ENCODE measurements at regions of chr2 and their contacts with region 1.

Region 1: DNA sequence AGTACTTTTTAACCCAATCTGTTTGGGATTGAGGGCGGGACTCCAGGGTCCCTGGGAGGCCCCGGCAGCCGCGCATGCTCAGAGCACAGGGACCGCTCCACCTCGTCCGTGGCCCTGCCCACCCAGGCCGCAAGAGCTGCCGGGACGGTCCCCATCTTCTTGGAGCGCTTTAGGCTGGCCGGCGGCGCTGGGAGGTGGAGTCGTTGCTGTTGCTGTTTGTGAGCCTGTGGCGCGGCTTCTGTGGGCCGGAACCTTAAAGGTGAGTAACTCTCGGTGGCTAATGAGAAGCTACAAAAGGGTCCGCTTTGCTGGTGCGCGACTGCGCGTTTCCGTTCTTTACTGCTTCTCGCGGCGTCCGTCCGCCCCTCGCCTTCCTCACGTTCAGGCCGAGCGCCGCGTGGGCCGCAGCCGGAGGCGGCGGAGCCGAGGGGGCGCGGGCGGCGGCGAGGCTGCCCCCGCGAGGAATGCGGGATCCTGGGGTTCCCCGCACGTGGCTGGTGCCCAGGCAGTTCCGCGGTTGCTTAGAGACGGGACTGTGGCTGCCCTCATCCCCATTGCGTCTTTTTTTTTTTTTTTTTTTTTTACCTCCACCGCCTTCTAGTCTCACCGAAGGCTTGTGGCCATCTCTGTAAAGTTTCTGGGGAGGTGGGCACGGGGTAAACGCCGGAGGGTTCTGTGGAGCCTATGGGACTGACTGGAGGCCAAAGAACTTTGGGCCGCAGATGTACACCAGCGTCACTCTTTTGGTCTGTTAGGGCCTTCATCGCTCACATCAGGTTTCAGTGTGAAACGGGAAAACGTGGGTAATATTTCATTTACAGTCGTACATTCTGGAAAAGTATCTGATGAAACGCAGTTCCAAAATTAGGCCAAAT is at the start of gene SSB:
- DNase-seq: peak; percentile 89
- ATAC-seq: peak; percentile 96
- H3K4me3 Mint-ChIP-seq: peak within 1 kb of the TSS; percentile 91
- H3K27ac Mint-ChIP-seq: peak within 1 kb of the TSS; percentile 94
- H3K4me1 Mint-ChIP-seq: peaks cover 22% of the 10 kb centered on the region
- H3K27me3 Mint-ChIP-seq: no peaks in the 10 kb centered on the region
- CTCF ChIP-seq: no peak
- total RNA-seq, gene SSB: 94.7 and 100 TPM in 2 replicates

Region 2: DNA sequence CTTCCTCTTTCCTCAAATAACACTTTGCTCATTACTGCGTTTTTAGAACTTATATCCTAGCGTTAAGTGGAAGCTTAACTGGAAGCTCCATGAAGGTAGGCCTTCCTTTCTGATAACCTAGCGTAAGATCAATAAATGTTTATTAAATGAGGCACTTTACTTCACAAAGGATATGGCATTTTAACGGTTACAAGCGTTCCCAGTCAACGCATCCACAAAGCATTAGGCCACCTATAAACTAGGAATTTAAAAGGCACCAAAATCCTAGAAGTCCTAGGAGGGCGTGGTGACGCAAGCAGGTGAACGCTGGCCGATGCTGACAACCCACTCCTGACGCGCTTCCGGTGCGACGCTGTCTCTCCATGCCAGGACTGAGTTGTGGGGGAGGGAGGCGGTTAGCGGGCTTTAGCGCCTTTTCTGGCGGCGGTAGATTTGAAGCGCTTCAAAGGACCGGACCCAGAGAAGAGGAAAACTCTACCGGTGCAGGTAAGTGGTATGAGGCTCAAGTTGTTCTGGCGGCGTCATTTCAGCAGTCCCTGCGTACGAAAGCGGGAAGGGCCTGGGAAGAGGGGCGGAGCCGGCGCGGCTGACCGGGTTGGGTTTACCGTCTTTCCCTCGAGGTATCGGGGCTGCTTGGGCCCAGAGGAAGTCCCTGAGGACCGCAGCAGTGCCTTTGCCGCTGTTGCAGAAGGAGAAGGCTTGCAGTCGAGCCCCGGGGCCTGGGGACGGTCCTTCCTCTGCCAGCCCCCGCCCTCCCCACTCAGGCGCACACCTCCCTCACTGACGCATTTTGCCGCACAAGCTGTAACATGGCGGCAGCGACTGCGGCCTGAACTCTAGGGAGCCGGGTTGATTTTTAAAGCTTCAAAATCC is 214.7 kb before region 1 on chr2 and contains the start of gene PPIG:
- CTCF ChIA-PET with region 1: no interaction called
- POLR2A ChIA-PET with region 1: interaction called, 14 read pairs
- intact Hi-C with region 1: loop called (anchors 1 kb)
- DNase-seq: peak; percentile 75
- ATAC-seq: peak; percentile 89
- H3K4me3 Mint-ChIP-seq: peak within 1 kb of the TSS; percentile 99
- H3K27ac Mint-ChIP-seq: peak within 1 kb of the TSS; percentile 99
- H3K4me1 Mint-ChIP-seq: peaks cover 39% of the 10 kb centered on the region
- H3K27me3 Mint-ChIP-seq: no peaks in the 10 kb centered on the region
- CTCF ChIP-seq: no peak
- total RNA-seq, gene PPIG: 68.0 and 69.8 TPM in 2 replicates

Region 3: DNA sequence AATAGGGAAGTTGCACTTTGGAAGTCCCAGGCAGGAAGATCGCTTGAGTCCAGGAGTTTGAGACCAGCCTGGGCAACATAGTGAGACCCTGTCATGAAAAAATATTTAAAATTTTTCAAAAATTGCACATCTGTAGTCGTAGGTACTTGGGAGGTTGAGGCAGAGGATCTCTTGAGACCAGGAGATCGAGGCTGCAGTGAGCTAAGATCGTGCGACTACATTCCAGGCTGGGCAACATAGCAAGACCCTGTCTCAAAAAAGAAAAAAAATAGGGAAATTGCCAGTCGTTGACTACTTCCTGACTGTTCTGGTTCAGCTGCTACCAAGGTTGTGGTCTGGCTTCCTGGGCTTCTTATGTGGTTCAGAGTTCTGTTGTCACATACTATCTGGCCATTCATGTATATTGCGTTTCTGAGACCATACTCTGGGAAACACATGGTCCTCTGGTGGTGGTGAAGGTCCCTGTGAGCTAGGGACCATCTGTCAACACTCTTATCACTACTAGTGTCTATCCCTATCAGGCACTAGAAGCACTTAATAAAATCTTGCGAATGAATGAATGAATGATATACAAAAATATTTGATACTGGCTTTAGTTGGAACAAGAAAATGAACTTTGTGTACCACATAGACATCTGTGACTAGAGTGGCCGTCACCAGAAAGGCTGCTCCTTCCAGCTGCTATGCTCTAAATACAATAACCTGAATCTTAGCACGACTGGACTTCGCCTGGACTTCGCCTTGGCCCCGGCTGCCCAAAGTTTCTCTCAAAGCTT is 66.2 kb before region 1 on chr2:
- CTCF ChIA-PET with region 1: no interaction called
- POLR2A ChIA-PET with region 1: no interaction called
- intact Hi-C with region 1: loop called (anchors 2 kb)
- DNase-seq: no peak
- ATAC-seq: no peak
- H3K4me3 Mint-ChIP-seq: peak overlapping the region; percentile 90
- H3K27ac Mint-ChIP-seq: no peak overlapping the region
- H3K4me1 Mint-ChIP-seq: peaks cover 15% of the 10 kb centered on the region
- H3K27me3 Mint-ChIP-seq: peaks cover 12% of the 10 kb centered on the region
- CTCF ChIP-seq: no peak

Region 4: GRCh38 chr2:169782513-169782912 is 16.4 kb before region 1 on chr2:
- CTCF ChIA-PET with region 1: no interaction called
- POLR2A ChIA-PET with region 1: no interaction called
- intact Hi-C with region 1: no loop called
- DNase-seq: no peak
- ATAC-seq: no peak
- H3K4me3 Mint-ChIP-seq: no peak overlapping the region
- H3K27ac Mint-ChIP-seq: no peak overlapping the region
- H3K4me1 Mint-ChIP-seq: no peaks in the 10 kb centered on the region
- H3K27me3 Mint-ChIP-seq: peaks cover 4% of the 10 kb centered on the region
- CTCF ChIP-seq: no peak

Region 5: GRCh38 chr2:169877398-169877797 is 78.4 kb after region 1 on chr2:
- CTCF ChIA-PET with region 1: no interaction called
- POLR2A ChIA-PET with region 1: no interaction called
- intact Hi-C with region 1: no loop called
- DNase-seq: no peak
- ATAC-seq: no peak
- H3K4me3 Mint-ChIP-seq: no peak overlapping the region
- H3K27ac Mint-ChIP-seq: no peak overlapping the region
- H3K4me1 Mint-ChIP-seq: peaks cover 2% of the 10 kb centered on the region
- H3K27me3 Mint-ChIP-seq: no peaks in the 10 kb centered on the region
- CTCF ChIP-seq: no peak

Measured in activated B cell treated with CpG ODN at 0.5 μM for 24 hours (primary cell).